ENCODE measurements at regions of chr3 and their contacts with region 1.

Region 1: DNA sequence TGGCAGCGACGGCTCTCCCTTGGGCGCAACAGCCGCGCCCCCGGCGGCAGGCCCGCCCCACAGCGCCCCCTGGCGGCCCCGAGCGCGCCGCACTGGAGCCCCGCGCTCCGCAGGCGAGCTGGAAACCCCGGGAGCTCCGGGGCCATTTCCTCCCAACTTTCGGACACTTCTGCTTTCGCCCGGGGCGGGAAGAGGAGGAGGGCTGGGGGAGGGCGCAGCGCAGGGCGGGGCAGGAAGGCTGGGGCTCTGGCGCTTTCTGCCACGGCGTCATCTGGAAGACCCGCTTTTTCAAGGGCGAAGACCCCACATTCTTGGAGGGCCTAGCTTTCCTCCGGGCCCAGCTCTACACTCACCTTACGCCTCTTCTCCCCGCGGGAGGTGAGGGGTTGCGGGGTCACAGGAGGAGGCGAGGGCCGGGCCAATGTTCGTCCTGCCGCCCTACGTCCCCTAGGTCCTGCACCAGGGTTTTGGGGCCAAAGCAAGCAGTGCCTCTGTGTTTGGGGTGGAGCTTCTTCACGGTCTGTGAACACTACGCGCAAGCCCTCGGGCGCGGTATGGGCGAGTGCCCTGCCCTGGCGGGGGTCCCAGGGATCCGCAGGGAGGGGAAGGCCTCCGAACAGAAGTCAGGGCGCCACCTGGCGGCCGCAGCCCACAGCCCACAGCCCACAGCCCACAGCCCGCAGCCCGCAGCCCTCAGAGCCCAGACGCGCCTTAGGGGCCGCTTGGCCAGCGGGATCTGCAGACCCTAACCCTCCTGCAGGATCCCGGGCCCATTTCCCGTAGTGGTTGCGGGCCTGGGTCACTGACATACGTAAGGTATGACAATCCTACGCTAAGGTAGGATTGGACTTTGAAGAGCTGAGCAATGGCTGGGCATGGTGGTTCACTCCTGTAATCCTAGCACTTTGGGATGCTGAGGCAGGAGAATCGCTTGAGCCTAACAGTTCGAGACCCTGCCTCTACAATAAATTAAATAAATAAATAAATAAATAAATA is 31.1 kb downstream of the FOXL2 start:
- DNase-seq: peak; percentile 83
- ATAC-seq: peak; percentile 92
- H3K4me3 ChIP-seq: peak overlapping the region; percentile 96
- H3K27ac ChIP-seq: peak overlapping the region; percentile 99
- H3K4me1 ChIP-seq: peaks cover 4% of the 10 kb centered on the region
- H3K27me3 ChIP-seq: no peaks in the 10 kb centered on the region
- CTCF ChIP-seq: peak; percentile 97
- POLR2A ChIP-seq: no peak
- RAD21 ChIP-seq: peak; percentile 80

Region 2: GRCh38 chr3:138479438-138479863 is 436.4 kb before region 1 on chr3:
- CTCF ChIA-PET with region 1: interaction called, 12 read pairs
- POLR2A ChIA-PET with region 1: no interaction called
- dilution Hi-C with region 1: no loop called
- in situ Hi-C with region 1: no loop called
- intact Hi-C with region 1: no loop called
- DNase-seq: peak; percentile 46
- ATAC-seq: peak; percentile 79
- H3K4me3 ChIP-seq: no peak overlapping the region
- H3K27ac ChIP-seq: no peak overlapping the region
- H3K4me1 ChIP-seq: no peaks in the 10 kb centered on the region
- H3K27me3 ChIP-seq: no peaks in the 10 kb centered on the region
- CTCF ChIP-seq: peak; percentile 70
- POLR2A ChIP-seq: no peak
- RAD21 ChIP-seq: peak; percentile 72

Region 3: DNA sequence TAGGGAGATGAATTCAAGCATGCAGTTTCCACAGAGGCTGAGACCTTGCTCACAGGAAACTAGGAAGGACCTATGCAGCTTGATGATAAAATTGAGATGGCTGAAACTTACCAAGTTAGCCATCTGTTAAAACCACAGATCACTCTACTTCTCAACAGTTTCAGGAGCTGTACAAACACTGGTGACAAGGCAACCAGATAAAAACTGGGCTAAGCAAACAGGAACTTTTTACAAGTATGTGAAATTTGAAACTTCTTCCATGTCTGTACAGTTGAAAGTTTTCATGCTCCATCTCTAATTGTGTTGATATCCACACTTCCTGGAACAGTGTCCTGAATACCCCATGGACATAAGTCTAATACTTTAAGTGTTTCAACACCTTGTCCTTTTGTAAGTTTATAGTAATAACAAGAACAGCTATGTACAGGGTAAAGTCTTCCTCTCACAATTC is 229.0 kb before region 1 on chr3:
- CTCF ChIA-PET with region 1: interaction called, 12 read pairs
- POLR2A ChIA-PET with region 1: no interaction called
- dilution Hi-C with region 1: no loop called
- in situ Hi-C with region 1: no loop called
- intact Hi-C with region 1: no loop called
- DNase-seq: peak; percentile 89
- ATAC-seq: peak; percentile 88
- H3K4me3 ChIP-seq: no peak overlapping the region
- H3K27ac ChIP-seq: no peak overlapping the region
- H3K4me1 ChIP-seq: peaks cover 4% of the 10 kb centered on the region
- H3K27me3 ChIP-seq: no peaks in the 10 kb centered on the region
- CTCF ChIP-seq: no peak
- POLR2A ChIP-seq: no peak
- RAD21 ChIP-seq: no peak

Region 4: GRCh38 chr3:138774529-138775253 is 141.1 kb before region 1 on chr3:
- CTCF ChIA-PET with region 1: interaction called, 7 read pairs
- POLR2A ChIA-PET with region 1: no interaction called
- dilution Hi-C with region 1: no loop called
- in situ Hi-C with region 1: no loop called
- intact Hi-C with region 1: loop called (anchors 1 kb)
- DNase-seq: peak; percentile 100
- ATAC-seq: peak; percentile 83
- H3K4me3 ChIP-seq: no peak overlapping the region
- H3K27ac ChIP-seq: peak overlapping the region; percentile 87
- H3K4me1 ChIP-seq: peaks cover 10% of the 10 kb centered on the region
- H3K27me3 ChIP-seq: no peaks in the 10 kb centered on the region
- CTCF ChIP-seq: peak; percentile 1; the same call in 1 of the 2 replicates
- POLR2A ChIP-seq: no peak
- RAD21 ChIP-seq: no peak

Region 5: GRCh38 chr3:138842483-138843188 is 73.2 kb before region 1 on chr3:
- CTCF ChIA-PET with region 1: no interaction called
- POLR2A ChIA-PET with region 1: no interaction called
- dilution Hi-C with region 1: no loop called
- in situ Hi-C with region 1: no loop called
- intact Hi-C with region 1: no loop called
- DNase-seq: no peak
- ATAC-seq: no peak
- H3K4me3 ChIP-seq: no peak overlapping the region
- H3K27ac ChIP-seq: no peak overlapping the region
- H3K4me1 ChIP-seq: no peaks in the 10 kb centered on the region
- H3K27me3 ChIP-seq: no peaks in the 10 kb centered on the region
- CTCF ChIP-seq: no peak
- POLR2A ChIP-seq: no peak
- RAD21 ChIP-seq: no peak

Region 6: GRCh38 chr3:138898301-138898700 is 17.5 kb before region 1 on chr3:
- CTCF ChIA-PET with region 1: interaction called, 30 read pairs
- POLR2A ChIA-PET with region 1: no interaction called
- dilution Hi-C with region 1: no loop called
- in situ Hi-C with region 1: no loop called
- intact Hi-C with region 1: no loop called
- DNase-seq: peak; percentile 57
- ATAC-seq: peak; percentile 97
- H3K4me3 ChIP-seq: no peak overlapping the region
- H3K27ac ChIP-seq: no peak overlapping the region
- H3K4me1 ChIP-seq: peaks cover 6% of the 10 kb centered on the region
- H3K27me3 ChIP-seq: no peaks in the 10 kb centered on the region
- CTCF ChIP-seq: no peak
- POLR2A ChIP-seq: no peak
- RAD21 ChIP-seq: no peak

Region 7: GRCh38 chr3:138995706-138996105 is 79.9 kb after region 1 on chr3:
- CTCF ChIA-PET with region 1: no interaction called
- POLR2A ChIA-PET with region 1: no interaction called
- dilution Hi-C with region 1: no loop called
- in situ Hi-C with region 1: no loop called
- intact Hi-C with region 1: no loop called
- DNase-seq: no peak
- ATAC-seq: no peak
- H3K4me3 ChIP-seq: no peak overlapping the region
- H3K27ac ChIP-seq: no peak overlapping the region
- H3K4me1 ChIP-seq: no peaks in the 10 kb centered on the region
- H3K27me3 ChIP-seq: 0 out of 2 replicates have a peak, but pooled peaks cover 2% of the 10 kb centered on the region
- CTCF ChIP-seq: no peak
- POLR2A ChIP-seq: no peak
- RAD21 ChIP-seq: no peak